ENCODE measurements at regions of chr2 and their contacts with region 1.

Region 1: GRCh38 chr2:170446082-170446481 is 268.1 kb downstream of the MYO3B start:
- DNase-seq: no peak
- ATAC-seq: no peak
- H3K4me3 ChIP-seq: no peak overlapping the region
- H3K4me3 Mint-ChIP-seq: no peak overlapping the region
- H3K27ac ChIP-seq: no peak overlapping the region
- H3K27ac Mint-ChIP-seq: peak overlapping the region in 1 of 2 donors; percentile 25
- H3K4me1 ChIP-seq: no peaks in the 10 kb centered on the region
- H3K4me1 Mint-ChIP-seq: no peaks in the 10 kb centered on the region
- H3K27me3 ChIP-seq: no peaks in the 10 kb centered on the region
- H3K27me3 Mint-ChIP-seq: peaks cover 13 to 16% of the 10 kb centered on the region in 2 donors

Region 2: GRCh38 chr2:170434900-170435621 is 11.0 kb before region 1 on chr2:
- CTCF ChIA-PET with region 1: no interaction called
- POLR2A ChIA-PET with region 1: no interaction called
- DNase-seq: peak in 1 of 35 experiments; percentile 53
- ATAC-seq: peak; percentile 66 to 82 (median 71)
- H3K4me3 ChIP-seq: no peak overlapping the region
- H3K4me3 Mint-ChIP-seq: peak overlapping the region; percentile 52 to 59 (median 56)
- H3K27ac ChIP-seq: no peak overlapping the region
- H3K27ac Mint-ChIP-seq: no peak overlapping the region
- H3K4me1 ChIP-seq: peaks cover 23 to 32% of the 10 kb centered on the region in 2 experiments
- H3K4me1 Mint-ChIP-seq: peaks cover 28 to 39% (median 30%) of the 10 kb centered on the region in 3 donors
- H3K27me3 ChIP-seq: no peaks in the 10 kb centered on the region
- H3K27me3 Mint-ChIP-seq: peaks cover 3% of the 10 kb centered on the region in 2 donors

Region 3: DNA sequence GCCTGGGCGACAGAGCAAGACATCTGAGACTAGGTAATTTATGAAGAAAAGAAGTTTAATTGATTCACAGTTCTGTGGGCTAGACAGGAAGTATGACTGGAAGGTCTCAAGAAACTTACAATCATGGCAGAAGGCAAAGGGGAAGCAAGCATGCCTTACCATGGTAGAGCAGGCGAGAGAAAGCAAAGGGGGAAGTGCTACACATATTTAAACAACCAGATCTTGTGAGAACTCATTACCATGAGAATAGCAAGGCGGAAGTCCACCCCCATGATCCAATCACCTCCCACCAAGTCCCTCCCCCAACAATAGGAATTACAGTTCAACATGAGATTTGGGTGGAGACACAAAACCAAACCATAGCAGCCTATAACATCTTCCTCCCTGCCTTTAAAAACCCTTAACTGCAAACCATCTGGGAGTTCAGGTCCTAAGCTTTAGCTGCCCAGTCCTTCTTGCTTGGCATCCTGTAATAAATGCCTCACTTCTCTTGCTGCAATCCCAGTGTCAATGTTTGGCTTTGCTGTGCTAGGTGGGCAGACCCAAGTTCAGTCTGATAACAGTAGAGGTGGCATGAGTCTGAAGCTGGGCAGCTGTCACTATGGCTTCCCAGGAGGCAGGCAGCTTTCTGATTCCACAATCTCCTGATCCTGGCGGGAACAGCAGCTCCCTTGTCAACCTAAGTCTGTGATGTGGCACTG is 257.8 kb after region 1 on chr2:
- CTCF ChIA-PET with region 1: no interaction called
- POLR2A ChIA-PET with region 1: interaction called in 1 of 2 experiments, 13 read pairs
- DNase-seq: no peak
- ATAC-seq: no peak
- H3K4me3 ChIP-seq: no peak overlapping the region
- H3K4me3 Mint-ChIP-seq: no peak overlapping the region
- H3K27ac ChIP-seq: no peak overlapping the region
- H3K27ac Mint-ChIP-seq: no peak overlapping the region
- H3K4me1 ChIP-seq: no peaks in the 10 kb centered on the region
- H3K4me1 Mint-ChIP-seq: peaks cover 6 to 10% (median 6%) of the 10 kb centered on the region in 3 donors
- H3K27me3 ChIP-seq: peaks cover 0 to 23% of the 10 kb centered on the region in 2 experiments
- H3K27me3 Mint-ChIP-seq: peaks cover 29 to 38% of the 10 kb centered on the region in 2 donors

Measured in T-cell (primary cell).